Common myeloid progenitor, CD34-positive (primary cell): ENCODE measurements at regions of chr2 and their contacts with region 1.

Region 1: DNA sequence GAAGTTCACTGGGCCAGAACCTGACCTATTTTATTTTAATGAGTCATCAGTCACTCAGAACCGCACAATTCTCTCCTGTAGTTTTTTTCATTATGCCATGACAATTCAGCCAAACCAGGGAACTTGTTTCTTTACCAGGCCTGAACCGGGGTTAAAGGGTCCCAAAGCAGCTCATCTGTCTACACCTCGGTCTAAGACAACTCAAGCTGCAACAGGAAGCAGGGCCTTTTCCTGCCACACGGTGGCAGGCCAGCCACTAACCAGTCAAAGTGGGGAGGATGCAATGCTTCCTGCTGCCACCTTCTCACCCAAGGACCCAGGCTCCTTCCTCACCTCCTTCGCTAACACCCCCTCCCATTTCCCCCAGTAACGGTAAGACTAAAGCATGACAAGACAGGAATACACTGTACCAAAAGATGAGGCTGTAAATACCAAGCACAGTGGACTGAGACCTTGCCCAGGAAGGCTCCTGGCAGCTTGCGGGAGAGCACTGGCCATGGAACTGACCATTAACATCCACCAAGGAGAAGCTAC is 56.7 kb upstream of the ACKR3 start:
- DNase-seq: peak; percentile 67 to 81 (median 79)
- H3K4me3 ChIP-seq: no peak overlapping the region
- H3K27ac ChIP-seq: no peak overlapping the region
- H3K4me1 ChIP-seq: peaks cover 6 to 22% (median 16%) of the 10 kb centered on the region in 4 experiments
- H3K27me3 ChIP-seq: peaks cover 0 to 2% (median 0%) of the 10 kb centered on the region in 5 experiments

Region 2: DNA sequence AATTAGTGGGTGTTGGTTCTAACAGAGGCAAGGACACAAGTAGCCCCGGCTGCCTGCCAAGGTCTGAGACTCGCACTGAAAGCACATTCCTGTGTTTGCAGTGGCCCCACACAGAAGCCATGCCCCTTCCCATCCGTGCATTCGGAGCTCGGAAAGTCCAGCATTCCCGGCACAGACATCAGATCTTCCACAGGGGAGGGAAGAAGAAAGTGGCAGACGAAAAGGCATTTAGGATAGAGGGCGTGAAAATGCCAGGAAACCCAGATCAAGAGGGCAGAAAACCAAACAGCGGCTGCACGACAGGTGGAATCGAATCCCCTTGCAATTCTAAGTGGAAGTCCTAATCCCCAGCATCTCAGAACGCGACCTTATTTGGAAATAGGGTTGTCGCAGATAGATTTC is 143.3 kb before region 1 on chr2:
- CTCF ChIA-PET with region 1: no interaction called
- POLR2A ChIA-PET with region 1: no interaction called
- DNase-seq: no peak
- H3K4me3 ChIP-seq: no peak overlapping the region
- H3K27ac ChIP-seq: no peak overlapping the region
- H3K4me1 ChIP-seq: peaks cover 0 to 13% (median 12%) of the 10 kb centered on the region in 4 experiments
- H3K27me3 ChIP-seq: peaks cover 4 to 64% (median 25%) of the 10 kb centered on the region in 5 experiments

Region 3: DNA sequence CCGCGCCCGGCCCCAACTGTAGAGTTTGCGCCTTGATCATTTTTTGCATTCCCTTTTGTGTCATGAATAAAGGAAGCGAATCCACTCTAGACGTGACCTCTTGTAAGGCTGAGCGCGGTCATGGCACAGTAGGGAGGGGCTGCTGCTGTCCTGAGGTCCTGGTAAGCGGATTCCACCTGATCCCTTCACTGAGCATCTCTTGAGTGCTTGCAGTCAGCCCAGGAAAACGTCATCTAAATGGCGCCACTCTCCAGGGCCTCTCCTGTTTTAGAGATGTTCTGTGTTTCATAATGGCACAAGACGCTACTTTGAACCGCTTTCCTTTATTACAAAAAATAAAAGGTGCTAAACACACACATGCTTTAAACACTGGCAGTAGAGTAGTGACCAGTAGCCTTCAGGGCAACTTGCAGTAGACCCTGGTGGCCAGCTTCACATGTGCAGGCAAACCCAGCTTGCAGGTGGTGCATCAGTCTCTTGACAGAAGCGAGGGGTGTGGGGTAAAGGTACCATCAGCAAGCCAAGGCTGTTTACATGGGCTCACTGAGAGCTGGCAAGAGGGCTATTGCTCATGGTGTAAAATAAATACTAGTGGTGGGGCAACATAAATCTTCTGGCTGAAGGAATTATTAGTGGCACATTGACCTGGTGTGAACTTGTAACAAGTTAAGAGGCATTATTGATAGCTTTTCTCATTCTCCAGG is 13.6 kb after region 1 on chr2:
- CTCF ChIA-PET with region 1: interaction called, 14 read pairs
- POLR2A ChIA-PET with region 1: no interaction called
- DNase-seq: no peak
- H3K4me3 ChIP-seq: no peak overlapping the region
- H3K27ac ChIP-seq: no peak overlapping the region
- H3K4me1 ChIP-seq: peaks cover 0 to 13% (median 5%) of the 10 kb centered on the region in 4 experiments
- H3K27me3 ChIP-seq: no peaks in the 10 kb centered on the region

Region 4: DNA sequence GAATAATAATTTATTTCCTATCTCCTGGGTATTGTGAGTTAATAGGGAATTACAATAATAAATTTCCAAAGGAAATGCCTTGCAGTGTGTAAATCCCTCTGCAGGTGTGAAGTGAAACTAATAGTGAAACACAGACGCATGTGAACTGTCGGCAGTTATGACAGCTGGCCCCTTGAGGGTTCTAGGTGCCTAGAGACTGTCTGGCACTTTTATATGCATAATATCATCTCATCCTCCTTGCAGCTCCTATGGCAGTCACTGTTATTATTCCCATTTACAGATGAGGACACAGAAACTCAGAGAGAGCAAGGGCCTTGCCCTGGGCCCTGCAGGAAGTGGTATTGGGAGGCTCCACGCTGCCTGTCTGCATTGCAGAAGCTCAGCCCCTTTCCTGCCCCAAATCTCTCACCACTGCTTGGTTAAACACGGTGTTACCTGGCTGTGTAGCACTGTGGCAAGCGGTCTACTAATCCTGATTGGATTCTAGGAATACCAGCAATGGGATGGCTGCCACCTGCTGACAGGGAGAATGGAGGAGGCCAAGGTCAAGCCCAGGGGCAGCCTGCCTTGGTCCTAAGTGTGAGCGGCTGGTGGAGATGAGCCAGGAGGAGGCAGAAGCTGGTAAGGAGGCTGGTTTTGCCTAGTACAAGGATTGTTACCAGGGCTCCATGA is 23.9 kb after region 1 on chr2:
- CTCF ChIA-PET with region 1: interaction called, 28 read pairs
- POLR2A ChIA-PET with region 1: interaction called, 3 read pairs
- DNase-seq: peak in 2 of 3 donors; percentile 59 to 73
- H3K4me3 ChIP-seq: peak overlapping the region; percentile 11 to 84 (median 69)
- H3K27ac ChIP-seq: peak overlapping the region in 1 of 2 experiments; percentile 72
- H3K4me1 ChIP-seq: peaks cover 12 to 56% (median 34%) of the 10 kb centered on the region in 4 experiments
- H3K27me3 ChIP-seq: no peaks in the 10 kb centered on the region

Region 5: DNA sequence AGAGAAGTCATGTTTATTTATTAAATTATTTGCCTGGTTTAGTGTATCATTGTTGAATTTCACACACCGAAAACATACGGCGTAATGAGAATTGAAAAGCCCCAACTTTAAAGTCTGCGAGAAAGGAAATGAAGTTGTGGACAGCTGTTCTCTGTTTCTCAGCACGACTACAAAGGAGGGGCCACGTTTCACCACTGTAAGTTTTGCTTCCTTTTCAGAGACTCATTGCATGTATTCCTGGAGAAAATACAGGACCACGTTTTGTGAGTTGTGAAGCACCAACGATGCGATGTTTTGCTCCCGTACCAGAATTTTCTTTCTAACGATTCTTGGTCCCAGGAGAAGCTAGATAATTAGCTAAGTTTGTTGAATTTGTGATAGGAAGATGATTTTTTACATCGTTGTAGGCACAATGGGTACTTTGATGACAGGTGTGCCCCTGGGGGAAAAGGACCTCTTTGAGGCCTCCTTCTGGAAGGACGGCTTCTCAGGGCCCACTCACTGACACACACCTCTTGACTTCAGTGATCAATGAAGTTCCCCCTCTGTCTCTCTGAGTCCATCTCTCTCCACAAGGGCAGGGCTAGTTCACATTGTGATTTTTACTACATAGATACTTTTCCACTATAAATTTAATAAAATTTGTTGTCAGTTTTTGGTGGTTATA is 33.0 kb after region 1 on chr2:
- CTCF ChIA-PET with region 1: interaction called, 14 read pairs
- POLR2A ChIA-PET with region 1: interaction called, 4 read pairs
- DNase-seq: peak; percentile 49 to 86 (median 77)
- H3K4me3 ChIP-seq: peak overlapping the region in 4 of 7 experiments; percentile 2 to 34 (median 18)
- H3K27ac ChIP-seq: peak overlapping the region; percentile 44 to 76
- H3K4me1 ChIP-seq: peaks cover 30 to 79% (median 63%) of the 10 kb centered on the region in 4 experiments
- H3K27me3 ChIP-seq: no peaks in the 10 kb centered on the region

Region 6: GRCh38 chr2:236558993-236559978 is 46.3 kb after region 1 on chr2:
- CTCF ChIA-PET with region 1: interaction called, 76 read pairs
- POLR2A ChIA-PET with region 1: no interaction called
- DNase-seq: no peak
- H3K4me3 ChIP-seq: peak overlapping the region in 1 of 7 experiments; percentile 11
- H3K27ac ChIP-seq: no peak overlapping the region
- H3K4me1 ChIP-seq: peaks cover 0 to 32% (median 10%) of the 10 kb centered on the region in 4 experiments
- H3K27me3 ChIP-seq: no peaks in the 10 kb centered on the region